Naive thymus-derived CD4-positive, alpha-beta T cell (primary cell): ENCODE measurements at regions of chr10 and their contacts with region 1.

Region 1: GRCh38 chr10:93352638-93353383 is 129.3 kb downstream of the MYOF start:
- DNase-seq: peak in 7 of 9 donors; percentile 16 to 53 (median 47)
- ATAC-seq: no peak
- H3K4me3 ChIP-seq: no peak overlapping the region
- H3K4me3 Mint-ChIP-seq: no peak overlapping the region
- H3K27ac ChIP-seq: no peak overlapping the region
- H3K27ac Mint-ChIP-seq: no peak overlapping the region
- H3K4me1 ChIP-seq: no peaks in the 10 kb centered on the region
- H3K4me1 Mint-ChIP-seq: peaks cover 0 to 3% (median 0%) of the 10 kb centered on the region in 7 donors
- H3K27me3 ChIP-seq: peaks cover 0 to 7% of the 10 kb centered on the region in 2 donors
- H3K27me3 Mint-ChIP-seq: peaks cover 0 to 23% (median 18%) of the 10 kb centered on the region in 5 donors

Region 2: DNA sequence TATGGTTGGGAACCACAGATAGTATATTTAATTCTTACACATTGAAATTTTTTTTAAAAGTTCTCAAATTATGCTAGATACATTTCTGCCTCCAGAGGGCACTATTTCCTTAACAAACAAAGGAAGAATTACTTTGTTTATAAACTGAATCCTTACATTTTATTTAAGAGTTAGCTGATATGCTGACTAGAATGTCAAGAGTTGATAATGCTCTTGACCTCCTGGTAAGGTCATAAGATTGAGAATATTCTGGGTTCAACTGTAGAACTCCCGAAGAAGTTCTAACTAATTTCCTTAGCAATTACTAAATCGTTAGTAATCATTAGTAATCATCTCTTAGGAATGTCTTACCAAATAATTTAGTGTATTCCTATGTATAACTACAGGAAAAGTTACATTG is 387.5 kb before region 1 on chr10:
- CTCF ChIA-PET with region 1: no interaction called
- POLR2A ChIA-PET with region 1: no interaction called
- intact Hi-C with region 1: loop called (anchors 1 to 2 kb)
- DNase-seq: peak in 5 of 9 donors; percentile 8 to 26 (median 14)
- ATAC-seq: no peak
- H3K4me3 ChIP-seq: no peak overlapping the region
- H3K4me3 Mint-ChIP-seq: no peak overlapping the region
- H3K27ac ChIP-seq: no peak overlapping the region
- H3K27ac Mint-ChIP-seq: no peak overlapping the region
- H3K4me1 ChIP-seq: no peaks in the 10 kb centered on the region
- H3K4me1 Mint-ChIP-seq: peaks cover 0 to 2% (median 0%) of the 10 kb centered on the region in 7 donors
- H3K27me3 ChIP-seq: no peaks in the 10 kb centered on the region
- H3K27me3 Mint-ChIP-seq: no peaks in the 10 kb centered on the region

Region 3: GRCh38 chr10:93080350-93081046 is 272.3 kb before region 1 on chr10:
- CTCF ChIA-PET with region 1: interaction called, 3 read pairs
- POLR2A ChIA-PET with region 1: no interaction called
- intact Hi-C with region 1: loop called (anchors 1 kb)
- DNase-seq: peak in 8 of 9 donors; percentile 18 to 57 (median 44)
- ATAC-seq: peak; percentile 81
- H3K4me3 ChIP-seq: no peak overlapping the region
- H3K4me3 Mint-ChIP-seq: peak overlapping the region in 4 of 10 donors; percentile 2 to 70 (median 44)
- H3K27ac ChIP-seq: no peak overlapping the region
- H3K27ac Mint-ChIP-seq: no peak overlapping the region
- H3K4me1 ChIP-seq: no peaks in the 10 kb centered on the region
- H3K4me1 Mint-ChIP-seq: peaks cover 4 to 8% (median 7%) of the 10 kb centered on the region in 7 donors
- H3K27me3 ChIP-seq: no peaks in the 10 kb centered on the region
- H3K27me3 Mint-ChIP-seq: peaks cover 39 to 51% (median 45%) of the 10 kb centered on the region in 5 donors

Region 4: DNA sequence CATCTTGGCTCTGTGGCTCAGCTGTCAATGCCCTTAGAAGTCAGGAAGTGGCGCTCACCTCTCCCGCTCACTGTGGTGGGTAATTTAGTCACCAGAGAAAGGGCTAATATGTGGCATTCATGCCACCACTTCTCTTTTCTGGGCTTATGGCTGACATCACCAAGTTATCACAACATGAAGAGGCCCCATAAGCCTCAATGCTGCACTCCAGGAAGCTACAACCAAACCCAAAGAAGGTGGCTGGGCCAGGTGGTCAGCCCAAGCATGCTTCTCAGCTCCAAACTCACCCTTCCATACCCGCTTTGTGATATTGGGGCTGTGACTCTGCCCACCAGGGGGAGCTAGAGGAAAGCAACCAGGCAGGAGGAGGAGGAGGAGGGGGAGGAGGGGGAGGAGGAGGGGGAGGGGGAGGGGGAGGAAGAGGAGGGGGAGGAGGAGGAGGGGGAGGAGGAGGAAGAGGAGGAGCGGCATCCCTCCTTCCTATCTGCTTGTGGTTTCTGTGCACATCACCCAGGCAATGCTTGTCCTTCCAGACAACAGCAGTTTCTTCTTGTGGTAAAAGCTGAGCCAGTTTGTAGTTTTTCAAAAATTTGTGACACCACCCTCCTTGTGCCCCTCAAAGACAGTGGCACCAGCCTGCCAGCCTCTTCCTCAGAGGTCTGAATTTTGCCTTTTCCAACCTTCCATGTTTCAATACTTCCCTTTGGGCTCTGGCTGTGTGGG is 237.0 kb before region 1 on chr10:
- CTCF ChIA-PET with region 1: interaction called, 10 read pairs
- POLR2A ChIA-PET with region 1: no interaction called
- intact Hi-C with region 1: loop called (anchors 1 to 2 kb)
- DNase-seq: peak; percentile 51 to 77 (median 69)
- ATAC-seq: peak; percentile 82
- H3K4me3 ChIP-seq: no peak overlapping the region
- H3K4me3 Mint-ChIP-seq: peak overlapping the region in 5 of 10 donors; percentile 21 to 57 (median 41)
- H3K27ac ChIP-seq: no peak overlapping the region
- H3K27ac Mint-ChIP-seq: peak overlapping the region in 8 of 9 donors; percentile 12 to 80 (median 44)
- H3K4me1 ChIP-seq: peaks cover 4 to 15% of the 10 kb centered on the region in 2 donors
- H3K4me1 Mint-ChIP-seq: peaks cover 0 to 50% (median 17%) of the 10 kb centered on the region in 7 donors
- H3K27me3 ChIP-seq: no peaks in the 10 kb centered on the region
- H3K27me3 Mint-ChIP-seq: peaks cover 0 to 27% (median 9%) of the 10 kb centered on the region in 5 donors

Region 5: DNA sequence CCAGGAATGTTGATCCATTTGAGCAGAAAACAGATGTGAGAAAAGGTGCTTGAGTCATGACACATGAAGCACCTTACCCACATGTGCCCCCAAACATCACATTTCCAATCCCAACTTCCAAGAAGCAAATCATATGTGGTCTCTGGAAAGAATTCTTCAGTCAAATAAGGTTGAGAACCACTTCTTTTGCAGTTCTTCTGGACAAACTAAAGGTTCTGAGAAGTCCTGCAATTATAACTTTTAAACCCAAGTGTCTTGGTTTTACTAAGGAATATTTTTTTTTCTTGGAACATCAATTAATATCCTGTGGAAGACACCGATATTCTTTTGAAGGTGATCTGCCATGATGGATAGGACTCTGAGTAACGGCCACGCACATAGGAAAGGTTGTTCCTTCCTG is 22.0 kb before region 1 on chr10:
- CTCF ChIA-PET with region 1: no interaction called
- POLR2A ChIA-PET with region 1: no interaction called
- intact Hi-C with region 1: no loop called
- DNase-seq: no peak
- ATAC-seq: no peak
- H3K4me3 ChIP-seq: no peak overlapping the region
- H3K4me3 Mint-ChIP-seq: no peak overlapping the region
- H3K27ac ChIP-seq: no peak overlapping the region
- H3K27ac Mint-ChIP-seq: no peak overlapping the region
- H3K4me1 ChIP-seq: no peaks in the 10 kb centered on the region
- H3K4me1 Mint-ChIP-seq: no peaks in the 10 kb centered on the region
- H3K27me3 ChIP-seq: no peaks in the 10 kb centered on the region
- H3K27me3 Mint-ChIP-seq: peaks cover 0 to 23% (median 0%) of the 10 kb centered on the region in 5 donors

Region 6: GRCh38 chr10:93859049-93859655 is 506.3 kb after region 1 on chr10:
- CTCF ChIA-PET with region 1: no interaction called
- POLR2A ChIA-PET with region 1: no interaction called
- intact Hi-C with region 1: loop called in 1 of 2 experiments (anchors 5 kb)
- DNase-seq: peak in 1 of 9 donors; percentile 7
- ATAC-seq: no peak
- H3K4me3 ChIP-seq: no peak overlapping the region
- H3K4me3 Mint-ChIP-seq: no peak overlapping the region
- H3K27ac ChIP-seq: no peak overlapping the region
- H3K27ac Mint-ChIP-seq: no peak overlapping the region
- H3K4me1 ChIP-seq: no peaks in the 10 kb centered on the region
- H3K4me1 Mint-ChIP-seq: no peaks in the 10 kb centered on the region
- H3K27me3 ChIP-seq: no peaks in the 10 kb centered on the region
- H3K27me3 Mint-ChIP-seq: peaks cover 0 to 13% (median 6%) of the 10 kb centered on the region in 5 donors